Activated CD4-positive, alpha-beta memory T cell treated with anti-CD3 and anti-CD28 coated beads, Interleukin-2, amount 10 ng/mL, durations not matched to agents 7 days and 5 days (primary cell): ENCODE measurements at regions of chr9 and their contacts with region 1.

Region 1: GRCh38 chr9:21455320-21455719 is 15.1 kb downstream of the IFNA1 start:
- DNase-seq: no peak
- H3K4me3 Mint-ChIP-seq: no peak overlapping the region
- H3K27ac Mint-ChIP-seq: no peak overlapping the region
- H3K4me1 Mint-ChIP-seq: no peaks in the 10 kb centered on the region
- H3K27me3 Mint-ChIP-seq: peaks cover 20% of the 10 kb centered on the region

Region 2: DNA sequence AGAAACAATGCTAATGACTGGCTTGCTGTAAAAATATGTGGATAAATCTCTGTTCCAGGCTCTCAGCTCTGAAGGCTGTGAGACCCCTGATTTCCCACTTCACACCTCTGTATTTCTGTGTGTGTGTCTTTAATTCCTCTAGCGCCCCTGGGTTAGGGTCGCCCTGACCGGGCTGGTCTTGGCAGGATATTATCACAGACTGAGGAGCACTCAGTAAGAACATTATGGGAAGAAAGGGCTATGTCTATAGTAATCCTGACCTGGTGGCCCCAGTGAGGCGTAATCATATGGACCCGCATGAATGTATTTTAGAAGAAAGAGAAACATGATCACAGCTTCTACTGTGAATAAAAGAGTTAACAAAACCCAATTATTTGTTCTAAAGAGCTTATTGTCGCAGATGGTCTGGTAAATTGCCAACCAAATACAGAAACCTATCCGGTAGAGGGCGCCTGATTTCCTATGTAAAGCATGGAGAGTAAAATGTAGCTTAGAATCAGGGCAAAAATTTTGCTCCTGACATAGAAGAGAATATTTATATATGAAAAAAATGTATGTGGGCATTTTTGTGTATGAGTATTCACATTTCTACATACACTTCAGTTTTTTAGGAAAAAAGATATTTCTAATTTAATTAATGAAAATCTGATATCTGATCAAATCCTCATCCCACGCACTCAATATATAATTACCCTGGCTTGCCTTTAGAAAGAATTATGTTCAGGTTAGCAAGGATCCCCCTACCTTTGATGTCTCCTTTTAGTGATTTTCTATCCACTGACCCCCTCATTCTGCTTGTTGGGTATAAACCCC is 20.9 kb before region 1 on chr9:
- CTCF ChIA-PET with region 1: interaction called, 23 read pairs
- POLR2A ChIA-PET with region 1: no interaction called
- DNase-seq: peak; percentile 32
- H3K4me3 Mint-ChIP-seq: no peak overlapping the region
- H3K27ac Mint-ChIP-seq: no peak overlapping the region
- H3K4me1 Mint-ChIP-seq: no peaks in the 10 kb centered on the region
- H3K27me3 Mint-ChIP-seq: peaks cover 21% of the 10 kb centered on the region

Region 3: DNA sequence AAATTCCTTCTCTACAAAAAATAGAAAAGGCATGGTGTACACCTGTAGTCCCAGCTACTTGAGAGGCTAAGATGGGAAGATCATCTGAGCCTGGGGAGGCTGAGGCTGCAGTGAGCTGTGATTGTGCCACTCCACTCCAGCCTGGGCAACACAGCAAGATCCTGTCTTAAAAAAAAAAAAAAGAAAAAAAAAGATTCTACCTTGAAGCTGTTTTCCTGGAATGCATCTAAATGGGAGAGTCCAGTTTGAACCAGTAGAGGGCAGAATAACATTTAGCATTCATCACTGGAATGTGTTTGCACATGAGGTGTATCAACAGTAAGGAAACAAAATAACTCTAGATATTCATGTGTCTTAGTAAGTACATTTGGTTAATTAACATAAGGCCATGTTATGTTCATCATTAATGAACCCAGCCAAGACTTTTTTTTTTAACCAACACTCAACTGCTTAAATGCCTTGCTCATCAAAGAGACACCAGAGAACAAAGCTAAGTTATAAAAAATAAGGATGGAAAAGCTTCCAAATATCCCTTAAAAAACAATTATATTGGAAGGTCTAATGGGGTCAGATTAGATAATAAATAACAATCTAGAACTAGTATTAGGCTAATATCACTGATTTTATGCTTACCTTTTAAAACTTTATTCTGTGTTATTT is 10.7 kb after region 1 on chr9:
- CTCF ChIA-PET with region 1: interaction called, 10 read pairs
- POLR2A ChIA-PET with region 1: no interaction called
- DNase-seq: no peak
- H3K4me3 Mint-ChIP-seq: no peak overlapping the region
- H3K27ac Mint-ChIP-seq: no peak overlapping the region
- H3K4me1 Mint-ChIP-seq: no peaks in the 10 kb centered on the region
- H3K27me3 Mint-ChIP-seq: peaks cover 24% of the 10 kb centered on the region